Activated B cell treated with CpG ODN at 0.5 μM for 24 hours (primary cell): ENCODE measurements at regions of chr5 and their contacts with region 1.

Region 1: GRCh38 chr5:153974131-153974812 is 64.4 kb downstream of the FAM114A2 start:
- DNase-seq: no peak
- ATAC-seq: no peak
- H3K4me3 Mint-ChIP-seq: no peak overlapping the region
- H3K27ac Mint-ChIP-seq: no peak overlapping the region
- H3K4me1 Mint-ChIP-seq: no peaks in the 10 kb centered on the region
- H3K27me3 Mint-ChIP-seq: peaks cover 10% of the 10 kb centered on the region
- CTCF ChIP-seq: no peak

Region 2: GRCh38 chr5:153907170-153907775 is 67.0 kb before region 1 on chr5:
- CTCF ChIA-PET with region 1: no interaction called
- POLR2A ChIA-PET with region 1: no interaction called
- intact Hi-C with region 1: no loop called
- DNase-seq: no peak
- ATAC-seq: no peak
- H3K4me3 Mint-ChIP-seq: no peak overlapping the region
- H3K27ac Mint-ChIP-seq: no peak overlapping the region
- H3K4me1 Mint-ChIP-seq: no peaks in the 10 kb centered on the region
- H3K27me3 Mint-ChIP-seq: peaks cover 4% of the 10 kb centered on the region
- CTCF ChIP-seq: no peak

Region 3: DNA sequence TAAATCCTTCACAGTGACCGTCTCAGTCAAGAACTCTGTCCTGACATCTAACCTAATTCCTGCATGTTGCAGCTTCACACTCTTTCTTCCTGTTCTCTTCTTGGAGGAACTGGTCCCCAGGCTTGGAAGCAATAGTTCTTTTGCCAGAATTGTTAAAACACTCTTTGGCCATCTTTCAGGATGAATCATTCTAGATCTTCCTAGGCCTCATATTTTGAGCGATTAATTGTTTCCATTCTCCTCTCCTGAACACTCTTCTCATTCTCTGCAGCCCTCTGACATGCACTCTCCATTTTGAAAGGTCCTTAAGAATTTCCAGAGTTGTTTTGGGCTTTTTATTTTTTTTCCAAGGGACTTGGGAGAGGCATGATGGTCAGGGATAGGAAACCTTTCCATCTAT is 21.4 kb before region 1 on chr5:
- CTCF ChIA-PET with region 1: no interaction called
- POLR2A ChIA-PET with region 1: no interaction called
- intact Hi-C with region 1: no loop called
- DNase-seq: no peak
- ATAC-seq: no peak
- H3K4me3 Mint-ChIP-seq: no peak overlapping the region
- H3K27ac Mint-ChIP-seq: no peak overlapping the region
- H3K4me1 Mint-ChIP-seq: no peaks in the 10 kb centered on the region
- H3K27me3 Mint-ChIP-seq: no peaks in the 10 kb centered on the region
- CTCF ChIP-seq: no peak

Region 4: GRCh38 chr5:154179846-154180710 is 205.8 kb after region 1 on chr5:
- CTCF ChIA-PET with region 1: interaction called, 11 read pairs
- POLR2A ChIA-PET with region 1: no interaction called
- intact Hi-C with region 1: loop called (anchors 1 kb)
- DNase-seq: no peak
- ATAC-seq: peak; percentile 93
- H3K4me3 Mint-ChIP-seq: no peak overlapping the region
- H3K27ac Mint-ChIP-seq: no peak overlapping the region
- H3K4me1 Mint-ChIP-seq: peaks cover 15% of the 10 kb centered on the region
- H3K27me3 Mint-ChIP-seq: peaks cover 9% of the 10 kb centered on the region
- CTCF ChIP-seq: no peak

Region 5: DNA sequence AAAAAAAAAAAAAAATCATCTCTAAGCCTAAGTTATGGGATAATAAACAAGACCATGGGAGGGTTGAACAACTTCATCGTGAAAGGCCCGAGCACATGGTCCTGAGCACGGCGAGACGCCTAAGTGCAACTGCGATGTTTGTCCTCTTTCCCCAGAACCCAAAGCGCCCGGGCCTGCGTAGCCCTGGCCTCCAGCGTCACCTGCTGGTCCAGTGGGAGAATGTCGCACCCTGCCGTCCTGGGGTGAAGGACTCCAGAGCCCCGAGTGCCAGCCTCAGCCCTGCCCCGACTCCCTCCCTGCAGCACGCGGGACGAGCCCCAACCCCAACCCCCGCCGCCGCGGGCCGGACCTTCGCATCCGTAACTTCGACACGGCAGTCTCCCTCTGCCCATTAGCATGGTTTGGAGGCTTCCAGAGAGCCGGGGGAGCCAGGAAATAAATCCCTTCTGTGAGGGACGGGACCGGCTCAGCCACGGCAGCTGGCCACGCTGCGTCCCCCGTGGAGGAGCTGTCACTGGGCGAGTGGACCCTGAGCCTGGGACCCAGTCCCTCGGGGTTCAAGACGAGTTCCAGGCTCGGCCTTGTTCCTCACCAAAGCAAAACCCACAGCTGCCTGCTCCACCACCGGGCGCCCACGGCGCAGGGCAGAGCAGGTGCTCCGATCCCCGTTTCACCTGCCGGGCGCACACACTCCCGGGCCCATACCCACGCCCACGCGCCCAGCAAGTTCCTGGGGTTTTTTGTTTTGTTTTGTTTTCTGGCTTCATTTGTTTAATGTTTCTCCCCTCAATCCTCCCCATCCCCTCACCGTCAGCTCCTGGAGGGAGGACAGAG is 636.3 kb after region 1 on chr5:
- CTCF ChIA-PET with region 1: no interaction called
- POLR2A ChIA-PET with region 1: no interaction called
- intact Hi-C with region 1: loop called (anchors 10 kb)
- DNase-seq: peak; percentile 31
- ATAC-seq: peak; percentile 82
- H3K4me3 Mint-ChIP-seq: peak overlapping the region; percentile 58
- H3K27ac Mint-ChIP-seq: no peak overlapping the region
- H3K4me1 Mint-ChIP-seq: peaks cover 16% of the 10 kb centered on the region
- H3K27me3 Mint-ChIP-seq: peaks cover 46% of the 10 kb centered on the region
- CTCF ChIP-seq: no peak